AG04449 (cell line): ENCODE measurements at regions of chr16 and their contacts with region 1.

Region 1: GRCh38 chr16:46801428-46802049 is 29.4 kb downstream of the C16orf87 start:
- DNase-seq: no peak
- H3K4me3 ChIP-seq: no peak overlapping the region
- CTCF ChIP-seq: peak; percentile 25

Region 2: DNA sequence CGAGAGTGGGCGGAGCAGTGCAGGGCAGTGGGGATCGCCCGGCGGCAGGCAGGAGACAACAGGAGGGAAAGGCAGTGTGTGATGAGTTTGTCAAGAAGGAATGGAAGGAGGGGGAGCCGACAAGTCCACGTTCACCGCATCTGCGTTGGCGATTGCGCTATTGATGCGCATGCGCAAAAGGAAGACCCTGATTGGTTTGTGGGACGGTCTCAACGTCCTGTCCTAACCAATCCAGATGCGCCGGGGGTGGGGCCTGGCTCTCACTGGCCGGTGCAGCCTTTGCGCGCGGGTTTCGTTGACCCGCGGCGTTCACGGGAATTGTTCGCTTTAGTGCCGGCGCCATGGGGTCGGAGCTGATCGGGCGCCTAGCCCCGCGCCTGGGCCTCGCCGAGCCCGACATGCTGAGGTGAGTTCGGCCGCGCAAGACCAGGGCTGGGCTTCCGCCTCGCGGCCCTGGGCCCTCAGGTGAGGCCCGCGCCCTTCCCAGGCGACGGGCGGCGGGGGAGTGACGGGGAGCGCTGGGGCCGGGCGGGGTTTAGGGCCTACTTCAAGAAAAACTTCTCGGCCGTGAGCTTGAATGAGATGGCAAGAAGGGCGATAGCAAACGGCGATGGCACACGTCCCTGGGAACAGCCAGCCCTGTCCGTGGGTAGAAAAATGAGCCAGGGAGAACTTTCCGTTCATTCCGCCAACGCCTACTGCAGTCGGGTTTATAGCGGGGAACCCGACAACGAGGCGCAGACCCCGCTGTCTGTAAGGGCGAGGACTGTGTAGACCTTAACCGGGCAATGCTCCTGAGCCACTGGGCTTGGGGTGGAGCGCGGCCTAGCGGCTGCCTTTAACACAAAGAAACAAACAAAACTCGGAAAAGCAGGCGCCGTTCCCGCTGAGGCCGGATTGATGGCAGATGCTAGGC is 111.9 kb before region 1 on chr16 and contains the start of gene ORC6:
- CTCF ChIA-PET with region 1: interaction called, 16 read pairs
- POLR2A ChIA-PET with region 1: no interaction called
- DNase-seq: peak; percentile 63
- H3K4me3 ChIP-seq: peak within 1 kb of the TSS; percentile 89
- CTCF ChIP-seq: peak; percentile 62

Region 3: DNA sequence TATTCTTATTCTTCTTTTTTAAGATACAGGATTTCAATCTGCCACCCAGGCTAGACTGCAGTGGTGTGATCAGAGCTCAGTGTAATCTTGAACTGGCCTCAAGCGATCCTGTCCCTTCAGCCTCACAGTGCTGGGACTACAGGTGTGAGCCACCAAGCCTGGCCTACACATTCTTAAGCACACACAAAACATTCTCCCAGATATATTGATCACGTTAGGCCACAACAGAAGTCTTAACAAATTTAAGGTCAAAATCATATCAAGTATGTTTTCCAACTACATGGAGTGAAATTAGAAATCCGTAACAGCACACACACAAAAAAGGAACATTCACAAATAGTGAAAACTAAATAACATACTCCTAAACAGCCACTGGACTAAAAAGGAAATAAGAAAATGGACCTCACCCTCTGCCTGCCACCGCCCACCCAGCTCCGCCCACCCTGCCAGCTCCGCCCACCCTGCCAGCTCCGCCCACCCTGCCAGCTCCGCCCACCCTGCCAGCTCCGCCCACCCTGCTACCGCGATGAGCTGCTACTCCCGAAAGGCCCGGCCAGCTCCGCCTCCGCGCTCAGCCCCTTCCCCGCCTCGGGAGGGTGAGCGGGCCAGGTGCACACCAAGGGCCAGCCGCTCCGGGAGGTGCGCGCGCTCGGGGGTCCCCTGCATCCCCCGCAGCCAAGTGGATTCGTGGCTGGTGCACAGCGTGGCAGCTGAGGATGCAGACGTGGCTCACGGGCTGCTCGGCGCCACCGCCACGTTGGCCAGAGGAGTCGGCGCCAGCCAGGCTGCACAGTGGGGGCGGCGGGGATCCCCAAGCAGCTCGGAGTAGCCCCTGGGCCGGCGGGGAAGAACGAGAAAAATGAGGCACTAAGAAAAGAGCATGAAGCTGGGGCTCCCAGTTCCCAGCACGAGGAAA is 11.8 kb before region 1 on chr16:
- CTCF ChIA-PET with region 1: interaction called, 32 read pairs
- POLR2A ChIA-PET with region 1: interaction called, 3 read pairs
- DNase-seq: no peak
- H3K4me3 ChIP-seq: peak overlapping the region; percentile 65
- CTCF ChIP-seq: no peak

Region 4: GRCh38 chr16:46822270-46822669 is 20.7 kb after region 1 on chr16:
- CTCF ChIA-PET with region 1: interaction called, 36 read pairs
- POLR2A ChIA-PET with region 1: interaction called, 5 read pairs
- DNase-seq: peak; percentile 50
- H3K4me3 ChIP-seq: no peak overlapping the region
- CTCF ChIP-seq: no peak

Region 5: GRCh38 chr16:46857368-46857945 is 55.9 kb after region 1 on chr16:
- CTCF ChIA-PET with region 1: no interaction called
- POLR2A ChIA-PET with region 1: no interaction called
- DNase-seq: no peak
- H3K4me3 ChIP-seq: no peak overlapping the region
- CTCF ChIP-seq: peak; percentile 27

Region 6: GRCh38 chr16:47247690-47248089 is 446.2 kb after region 1 on chr16:
- CTCF ChIA-PET with region 1: no interaction called
- POLR2A ChIA-PET with region 1: no interaction called
- DNase-seq: no peak
- H3K4me3 ChIP-seq: no peak overlapping the region
- CTCF ChIP-seq: no peak

Region 7: DNA sequence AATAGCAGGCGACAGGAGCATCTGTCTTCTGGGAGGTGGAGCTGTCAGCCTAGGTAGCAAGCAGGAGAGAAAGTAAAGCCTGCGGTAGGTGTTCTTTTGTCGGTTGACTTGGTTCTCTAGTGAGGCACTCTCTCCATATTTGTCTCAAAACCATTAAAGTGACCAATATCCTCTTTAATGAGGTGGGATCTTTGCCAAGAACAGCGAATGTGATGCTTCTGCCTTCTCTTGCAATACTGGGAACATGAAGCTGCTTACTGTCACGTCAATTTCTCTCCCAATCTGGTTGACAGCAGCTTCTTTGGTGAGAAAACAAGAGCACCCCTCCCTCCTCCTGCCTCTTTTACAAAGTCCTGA is 1177.6 kb after region 1 on chr16:
- CTCF ChIA-PET with region 1: no interaction called
- POLR2A ChIA-PET with region 1: no interaction called
- DNase-seq: no peak
- H3K4me3 ChIP-seq: no peak overlapping the region
- CTCF ChIP-seq: no peak